A673 (cell line): ENCODE measurements at regions of chr11 and their contacts with region 1.

Region 1: GRCh38 chr11:57530596-57531507 is at the start of gene TIMM10:
- DNase-seq: peak; percentile 100
- H3K4me3 ChIP-seq: peak within 1 kb of the TSS; percentile 95
- H3K27ac ChIP-seq: peak within 1 kb of the TSS; percentile 83
- H3K4me1 ChIP-seq: peaks cover 12% of the 10 kb centered on the region
- H3K27me3 ChIP-seq: no peaks in the 10 kb centered on the region
- CTCF ChIP-seq: no peak
- total RNA-seq, gene TIMM10: 165 and 176 TPM in 2 replicates

Region 2: GRCh38 chr11:57480409-57481137 is 50.3 kb before region 1 on chr11:
- CTCF ChIA-PET with region 1: no interaction called
- POLR2A ChIA-PET with region 1: no interaction called
- intact Hi-C with region 1: loop called (anchors 2 kb)
- DNase-seq: peak; percentile 87
- H3K4me3 ChIP-seq: no peak overlapping the region
- H3K27ac ChIP-seq: no peak overlapping the region
- H3K4me1 ChIP-seq: peaks cover 16% of the 10 kb centered on the region
- H3K27me3 ChIP-seq: peaks cover 4% of the 10 kb centered on the region
- CTCF ChIP-seq: peak; percentile 96

Region 3: DNA sequence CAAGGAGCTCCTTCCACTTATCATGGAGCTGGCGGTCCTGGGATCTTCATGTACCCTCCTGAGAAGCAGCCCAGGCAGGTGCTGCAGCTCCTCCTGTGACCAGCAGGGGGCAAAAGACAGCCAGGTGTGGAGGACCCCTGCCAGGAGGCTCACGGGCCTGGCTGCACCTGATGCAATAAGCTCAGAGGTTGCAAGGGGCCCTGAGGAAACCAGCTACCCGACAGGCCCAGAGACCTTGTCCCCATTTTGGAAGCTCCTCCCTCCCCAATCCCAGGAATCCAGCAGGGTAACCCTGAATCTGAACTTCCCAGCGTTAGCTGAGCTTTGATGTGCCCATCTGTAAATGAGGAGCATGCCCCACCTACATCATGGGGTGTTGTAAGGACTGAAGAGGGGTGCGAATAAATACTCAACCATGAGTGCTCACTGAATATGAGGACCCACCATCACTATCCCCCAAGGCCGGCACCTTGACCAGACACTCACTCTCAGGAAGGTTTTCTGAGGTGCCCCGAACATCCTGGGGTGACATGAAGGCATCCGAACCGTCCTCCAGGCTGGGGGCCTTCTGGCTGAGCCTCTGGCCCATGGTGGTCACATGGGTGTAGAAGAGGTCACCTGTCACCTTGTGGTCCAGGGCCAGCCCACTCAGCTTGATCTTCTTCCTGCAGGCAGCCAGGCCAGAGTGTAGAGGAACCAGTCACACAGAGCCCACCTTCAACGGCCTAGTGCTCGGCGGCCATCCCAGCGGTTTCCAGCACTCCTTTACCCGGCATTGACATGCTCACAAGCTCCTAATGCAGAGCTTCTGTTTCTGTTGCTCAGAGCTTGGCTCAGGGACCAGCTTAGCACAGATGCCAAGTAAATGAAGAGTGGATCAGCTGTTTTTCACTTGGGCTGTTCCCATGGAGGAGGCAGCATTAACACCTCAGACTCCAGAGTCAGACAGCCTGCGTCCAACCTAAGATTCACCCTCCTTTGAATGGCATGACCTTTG is 37.0 kb before region 1 on chr11:
- CTCF ChIA-PET with region 1: interaction called, 7 read pairs
- POLR2A ChIA-PET with region 1: no interaction called
- intact Hi-C with region 1: loop called (anchors 2 kb)
- DNase-seq: peak; percentile 35
- H3K4me3 ChIP-seq: no peak overlapping the region
- H3K27ac ChIP-seq: no peak overlapping the region
- H3K4me1 ChIP-seq: no peaks in the 10 kb centered on the region
- H3K27me3 ChIP-seq: no peaks in the 10 kb centered on the region
- CTCF ChIP-seq: peak; percentile 90

Region 4: GRCh38 chr11:57698843-57699365 is 168.1 kb after region 1 on chr11:
- CTCF ChIA-PET with region 1: no interaction called
- POLR2A ChIA-PET with region 1: interaction called, 17 read pairs
- intact Hi-C with region 1: no loop called
- DNase-seq: no peak
- H3K4me3 ChIP-seq: no peak overlapping the region
- H3K27ac ChIP-seq: no peak overlapping the region
- H3K4me1 ChIP-seq: no peaks in the 10 kb centered on the region
- H3K27me3 ChIP-seq: no peaks in the 10 kb centered on the region
- CTCF ChIP-seq: no peak